ENCODE measurements at regions of chr1 and their contacts with region 1.

Region 1: GRCh38 chr1:233440951-233441401 is 113.5 kb downstream of the MAP3K21 start:
- DNase-seq: no peak
- ATAC-seq: no peak
- H3K4me3 Mint-ChIP-seq: no peak overlapping the region
- H3K27ac Mint-ChIP-seq: no peak overlapping the region
- H3K4me1 Mint-ChIP-seq: no peaks in the 10 kb centered on the region
- H3K27me3 Mint-ChIP-seq: peaks cover 10% of the 10 kb centered on the region
- CTCF ChIP-seq: no peak

Region 2: DNA sequence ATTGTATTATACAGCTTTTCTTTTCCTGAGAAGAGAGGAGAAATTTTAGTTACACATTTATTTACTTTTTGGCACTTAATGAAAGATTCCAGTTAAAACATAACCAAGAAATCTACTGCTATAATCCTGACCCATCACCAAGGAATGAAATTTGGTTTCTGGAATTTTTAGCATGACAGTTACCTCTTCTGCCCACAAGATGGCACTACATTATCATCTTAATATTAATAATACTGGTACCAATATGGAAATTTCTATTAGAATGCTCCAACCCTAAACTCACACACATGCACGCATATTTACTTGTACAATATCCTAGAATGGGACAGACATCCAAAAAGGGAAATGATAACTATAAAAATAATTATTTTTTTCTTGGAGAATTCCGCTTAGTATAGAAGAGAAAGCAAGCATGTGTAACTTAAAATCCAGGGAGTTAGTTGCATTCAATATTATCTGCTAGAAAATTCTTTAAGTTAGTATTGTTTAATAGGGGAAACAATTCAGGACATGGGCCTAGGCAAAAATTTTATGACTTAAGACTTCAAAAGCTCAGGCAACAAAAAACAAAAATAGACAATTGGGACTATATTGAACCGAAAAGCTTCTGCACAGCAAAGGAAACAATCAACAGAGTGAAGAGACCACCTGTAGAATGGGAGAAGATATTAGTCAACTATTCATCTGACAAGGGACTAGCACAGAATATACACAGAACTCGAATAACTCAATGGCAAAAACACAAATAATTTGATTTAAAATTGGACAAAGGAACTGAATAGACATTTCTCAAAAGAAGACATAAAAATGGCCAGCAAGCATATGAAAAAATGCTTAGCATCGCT is 76.1 kb before region 1 on chr1:
- CTCF ChIA-PET with region 1: no interaction called
- POLR2A ChIA-PET with region 1: no interaction called
- intact Hi-C with region 1: no loop called
- DNase-seq: no peak
- ATAC-seq: peak; percentile 25
- H3K4me3 Mint-ChIP-seq: no peak overlapping the region
- H3K27ac Mint-ChIP-seq: no peak overlapping the region
- H3K4me1 Mint-ChIP-seq: no peaks in the 10 kb centered on the region
- H3K27me3 Mint-ChIP-seq: no peaks in the 10 kb centered on the region
- CTCF ChIP-seq: peak; percentile 23

Region 3: DNA sequence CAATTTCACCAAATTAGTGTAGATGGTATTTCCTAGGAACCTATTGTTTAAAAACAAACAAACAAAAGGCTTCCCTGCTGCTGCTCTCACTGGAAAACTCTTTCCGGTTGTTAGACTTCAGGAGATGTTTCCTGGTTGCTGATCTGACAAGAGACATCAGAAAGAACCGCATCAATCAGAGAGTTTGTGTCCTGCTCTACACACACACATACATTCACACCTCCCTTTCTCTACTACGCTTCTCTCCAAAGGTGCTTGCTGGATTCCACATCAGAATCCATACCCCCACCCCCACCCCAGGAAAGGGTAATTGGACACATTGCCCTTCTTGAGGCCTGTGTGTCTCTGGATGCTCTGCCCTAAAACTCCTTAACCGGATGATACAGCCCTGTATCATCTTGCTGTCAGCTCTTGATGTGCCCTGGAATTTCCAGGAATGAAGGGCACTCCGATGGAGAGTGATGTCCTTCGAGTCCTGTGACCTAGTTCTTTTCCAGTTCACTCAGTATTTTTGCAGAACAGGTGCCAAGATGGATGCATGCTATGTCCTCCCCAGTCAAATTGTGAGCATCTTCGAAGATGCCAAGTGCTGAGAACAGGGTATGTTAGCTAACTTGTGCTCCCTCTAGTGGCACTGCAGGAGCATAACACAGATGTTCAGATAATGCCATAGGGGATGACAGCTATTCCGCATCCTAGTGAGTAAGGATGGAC is 349.8 kb after region 1 on chr1:
- CTCF ChIA-PET with region 1: interaction called, 3 read pairs
- POLR2A ChIA-PET with region 1: no interaction called
- intact Hi-C with region 1: loop called (anchors 1 kb)
- DNase-seq: no peak
- ATAC-seq: peak; percentile 47
- H3K4me3 Mint-ChIP-seq: no peak overlapping the region
- H3K27ac Mint-ChIP-seq: no peak overlapping the region
- H3K4me1 Mint-ChIP-seq: no peaks in the 10 kb centered on the region
- H3K27me3 Mint-ChIP-seq: peaks cover 5% of the 10 kb centered on the region
- CTCF ChIP-seq: peak; percentile 88

Measured in activated B cell treated with CpG ODN at 0.5 μM for 24 hours (primary cell).